Heart left ventricle (tissue), 16 donors: ENCODE measurements at regions of chr1 and their contacts with region 1.

Region 1: GRCh38 chr1:1906185-1907097 is 8.6 kb upstream of the CALML6 start:
- DNase-seq: peak; percentile 89 to 92 (median 91)
- ATAC-seq: peak; percentile 67 to 88 (median 75)
- H3K4me3 ChIP-seq: no peak overlapping the region
- H3K27ac ChIP-seq: peak overlapping the region in 10 of 12 donors; percentile 24 to 84 (median 58)
- H3K4me1 ChIP-seq: peaks cover 0 to 36% (median 20%) of the 10 kb centered on the region in 12 donors
- H3K27me3 ChIP-seq: no peaks in the 10 kb centered on the region
- CTCF ChIP-seq: peak; percentile 89 to 96 (median 92)
- POLR2A ChIP-seq: no peak

Region 2: DNA sequence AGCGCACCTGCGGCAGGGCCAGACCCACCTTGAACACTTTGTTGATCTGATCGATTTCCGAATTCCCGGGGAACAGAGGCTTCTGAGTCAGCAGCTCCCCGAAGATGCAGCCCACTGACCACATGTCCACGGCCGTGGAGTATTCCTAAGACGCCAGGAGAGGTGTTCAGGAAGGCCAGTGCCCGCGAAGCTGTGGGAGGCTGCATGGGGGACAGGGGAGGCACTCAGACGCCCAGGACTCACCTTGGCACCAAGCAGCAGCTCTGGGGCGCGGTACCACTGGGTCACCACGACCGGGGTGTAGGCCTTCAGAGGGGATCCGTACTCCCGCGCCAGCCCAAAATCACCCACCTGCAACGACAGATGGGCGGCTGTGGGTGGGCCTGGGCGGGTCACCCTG is 202.6 kb before region 1 on chr1:
- intact Hi-C with region 1: loop called in 1 of 10 experiments (anchors 10 kb)
- DNase-seq: peak in 2 of 5 donors; percentile 20 to 33
- ATAC-seq: no peak
- H3K4me3 ChIP-seq: no peak overlapping the region
- H3K27ac ChIP-seq: no peak overlapping the region
- H3K4me1 ChIP-seq: no peaks in the 10 kb centered on the region
- H3K27me3 ChIP-seq: no peaks in the 10 kb centered on the region
- CTCF ChIP-seq: no peak
- POLR2A ChIP-seq: no peak

Region 3: DNA sequence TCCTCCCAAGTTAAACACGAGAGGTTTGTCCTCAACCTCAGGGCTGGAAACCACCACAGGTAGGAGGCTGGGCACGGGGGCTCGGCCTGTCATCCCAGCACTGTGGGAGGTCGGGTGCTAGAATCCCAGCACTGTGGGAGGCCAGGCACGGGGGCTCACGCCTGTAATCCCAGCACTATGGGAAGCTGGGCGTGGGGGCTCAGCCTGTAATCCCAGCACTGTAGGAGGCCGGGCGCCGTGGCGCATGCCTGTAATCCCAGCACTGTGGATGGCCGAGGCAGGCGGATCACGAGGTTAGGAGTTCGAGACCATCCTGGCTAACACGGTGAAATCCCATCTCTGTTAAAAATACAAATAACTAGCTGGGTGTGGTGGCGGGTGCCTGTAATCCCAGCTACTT is 175.6 kb before region 1 on chr1:
- intact Hi-C with region 1: no loop called
- DNase-seq: peak in 1 of 5 donors; percentile 8
- ATAC-seq: no peak
- H3K4me3 ChIP-seq: no peak overlapping the region
- H3K27ac ChIP-seq: no peak overlapping the region
- H3K4me1 ChIP-seq: peaks cover 0 to 16% (median 0%) of the 10 kb centered on the region in 12 donors
- H3K27me3 ChIP-seq: no peaks in the 10 kb centered on the region
- CTCF ChIP-seq: no peak
- POLR2A ChIP-seq: no peak

Region 4: DNA sequence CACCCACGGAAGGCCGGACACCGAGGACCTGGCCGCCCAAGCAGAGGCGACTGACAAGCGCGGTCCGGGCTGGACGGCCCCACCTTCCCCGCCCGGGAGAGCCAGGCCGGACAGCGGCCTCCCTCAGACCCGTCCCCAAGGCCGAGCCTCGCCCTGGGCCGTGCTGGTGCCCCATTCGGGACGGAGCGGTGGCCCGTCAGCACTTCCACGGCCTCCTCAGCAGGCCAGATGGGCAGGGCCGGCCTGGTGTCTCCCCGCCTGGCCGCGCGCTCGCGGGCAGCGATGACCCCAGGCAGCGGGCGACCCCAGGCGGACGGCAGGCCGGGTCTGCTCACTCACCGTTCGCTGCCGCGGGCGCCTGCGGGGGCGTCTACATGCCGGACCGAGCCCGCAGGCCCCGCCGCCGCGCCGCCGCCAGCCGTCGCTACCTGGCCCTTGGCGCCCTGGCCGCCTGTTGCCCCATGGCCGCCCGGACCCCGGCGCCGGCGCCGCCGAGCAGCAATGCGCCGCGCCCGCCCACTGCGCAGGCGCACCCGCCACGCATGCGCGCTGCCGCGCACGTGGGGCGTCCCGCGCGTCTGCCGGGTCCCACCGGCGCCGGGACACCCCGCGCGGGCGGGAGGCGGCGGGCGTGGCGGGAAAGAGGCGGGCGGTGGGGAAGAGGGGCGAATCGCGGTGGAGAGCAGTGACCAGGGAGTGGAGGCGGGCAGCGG is 128.3 kb before region 1 on chr1 and contains the start of gene NADK:
- intact Hi-C with region 1: loop called in 6 of 10 experiments (anchors 5 kb)
- DNase-seq: peak; percentile 61 to 85 (median 68)
- ATAC-seq: peak; percentile 19 to 62 (median 42)
- H3K4me3 ChIP-seq: peak within 1 kb of the TSS; percentile 71 to 92 (median 82)
- H3K27ac ChIP-seq: peak within 1 kb of the TSS; percentile 87 to 97 (median 94)
- H3K4me1 ChIP-seq: peaks cover 7 to 82% (median 65%) of the 10 kb centered on the region in 12 donors
- H3K27me3 ChIP-seq: no peaks in the 10 kb centered on the region
- CTCF ChIP-seq: peak in 1 of 12 donors; percentile 20
- POLR2A ChIP-seq: peak in 1 of 2 donors; percentile 40
- total RNA-seq, gene NADK: 17.7 to 45.2 (median 23.3) TPM

Region 5: GRCh38 chr1:1858382-1859086 is 47.9 kb before region 1 on chr1:
- intact Hi-C with region 1: loop called in 2 of 10 experiments (anchors 5 kb)
- DNase-seq: peak; percentile 73 to 92 (median 89)
- ATAC-seq: peak; percentile 77 to 94 (median 90)
- H3K4me3 ChIP-seq: peak overlapping the region in 9 of 12 donors; percentile 14 to 38 (median 35)
- H3K27ac ChIP-seq: peak overlapping the region; percentile 73 to 89 (median 83)
- H3K4me1 ChIP-seq: peaks cover 20 to 95% (median 78%) of the 10 kb centered on the region in 12 donors
- H3K27me3 ChIP-seq: no peaks in the 10 kb centered on the region
- CTCF ChIP-seq: peak in 11 of 12 donors; percentile 17 to 80 (median 53)
- POLR2A ChIP-seq: no peak

Region 6: GRCh38 chr1:1919304-1920056 is 13.0 kb after region 1 on chr1:
- intact Hi-C with region 1: loop called in 1 of 10 experiments (anchors 1 kb)
- DNase-seq: peak; percentile 98 to 100 (median 100)
- ATAC-seq: peak; percentile 91 to 94 (median 93)
- H3K4me3 ChIP-seq: peak overlapping the region; percentile 47 to 70 (median 63)
- H3K27ac ChIP-seq: peak overlapping the region in 10 of 12 donors; percentile 14 to 82 (median 48)
- H3K4me1 ChIP-seq: peaks cover 5 to 22% (median 13%) of the 10 kb centered on the region in 12 donors
- H3K27me3 ChIP-seq: no peaks in the 10 kb centered on the region
- CTCF ChIP-seq: no peak
- POLR2A ChIP-seq: no peak